ENCODE measurements at regions of chr3 and their contacts with region 1.

Region 1: GRCh38 chr3:146065573-146066006 is 95.4 kb downstream of the PLOD2 start:
- DNase-seq: no peak
- H3K4me3 ChIP-seq: no peak overlapping the region
- H3K27ac ChIP-seq: no peak overlapping the region
- H3K4me1 ChIP-seq: peaks cover 12% of the 10 kb centered on the region
- H3K27me3 ChIP-seq: no peaks in the 10 kb centered on the region
- CTCF ChIP-seq: peak; percentile 82

Region 2: GRCh38 chr3:146189519-146190173 is 124.1 kb after region 1 on chr3:
- intact Hi-C with region 1: loop called (anchors 5 kb)
- DNase-seq: no peak
- H3K4me3 ChIP-seq: no peak overlapping the region
- H3K27ac ChIP-seq: no peak overlapping the region
- H3K4me1 ChIP-seq: peaks cover 6% of the 10 kb centered on the region
- H3K27me3 ChIP-seq: no peaks in the 10 kb centered on the region
- CTCF ChIP-seq: peak; percentile 82

Region 3: DNA sequence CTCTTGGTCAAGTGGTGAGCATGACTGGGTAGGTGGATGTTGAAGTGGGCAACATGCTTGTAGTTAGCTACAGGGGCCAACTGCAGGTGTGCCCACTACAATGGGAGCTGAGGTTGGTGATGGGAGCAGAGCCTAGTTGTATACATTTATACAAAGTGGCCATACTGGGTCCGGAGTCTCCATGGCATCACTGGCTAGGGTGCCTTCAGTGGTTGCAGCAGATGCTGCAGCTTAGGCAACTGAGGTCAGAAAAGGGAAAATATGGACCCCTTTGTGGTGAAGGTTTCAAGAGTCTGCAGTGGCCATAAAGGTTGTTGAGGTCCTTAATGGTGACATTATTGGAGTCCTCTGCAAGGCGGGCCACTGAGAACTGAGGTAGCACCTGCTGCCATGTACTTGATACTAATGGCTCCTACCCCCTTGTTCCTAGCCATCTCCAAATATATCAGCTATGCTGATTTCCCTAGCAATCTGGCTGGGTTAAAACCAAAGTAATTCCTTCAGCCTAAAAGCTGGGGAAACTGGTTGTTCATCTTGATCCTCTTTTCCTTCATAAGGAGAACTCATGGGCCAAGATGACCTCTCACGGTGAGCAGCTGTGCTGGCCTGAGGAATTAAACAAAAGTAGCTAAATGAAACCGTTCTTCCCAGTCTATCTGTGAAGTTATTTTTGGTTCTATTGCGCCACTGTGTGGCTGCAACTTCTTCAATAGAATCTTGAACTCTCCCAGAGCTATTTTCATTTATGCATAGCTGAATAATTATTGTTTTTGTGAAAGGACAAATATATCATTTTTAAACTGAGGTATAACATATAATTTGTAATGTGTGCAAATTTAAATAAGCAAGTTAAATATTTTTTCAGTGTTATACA is 261.3 kb after region 1 on chr3:
- intact Hi-C with region 1: loop called (anchors 5 kb)
- DNase-seq: no peak
- H3K4me3 ChIP-seq: no peak overlapping the region
- H3K27ac ChIP-seq: no peak overlapping the region
- H3K4me1 ChIP-seq: no peaks in the 10 kb centered on the region
- H3K27me3 ChIP-seq: no peaks in the 10 kb centered on the region
- CTCF ChIP-seq: peak; percentile 64

Region 4: GRCh38 chr3:146416366-146416765 is 350.8 kb after region 1 on chr3:
- intact Hi-C with region 1: no loop called
- DNase-seq: no peak
- H3K4me3 ChIP-seq: no peak overlapping the region
- H3K27ac ChIP-seq: no peak overlapping the region
- H3K4me1 ChIP-seq: no peaks in the 10 kb centered on the region
- H3K27me3 ChIP-seq: no peaks in the 10 kb centered on the region
- CTCF ChIP-seq: no peak

Measured in left ventricle myocardium inferior (tissue), 1 donor.